IMR-90 (cell line): ENCODE measurements at regions of chr11 and their contacts with region 1.

Region 1: GRCh38 chr11:57644748-57645688 is 4.7 kb downstream of the YPEL4 start:
- DNase-seq: peak; percentile 67
- ATAC-seq: peak; percentile 28; the same call in 1 of the 2 replicates
- H3K4me3 ChIP-seq: no peak overlapping the region
- H3K27ac ChIP-seq: no peak overlapping the region
- H3K4me1 ChIP-seq: peaks cover 34% of the 10 kb centered on the region
- H3K27me3 ChIP-seq: no peaks in the 10 kb centered on the region
- CTCF ChIP-seq: peak; percentile 73
- POLR2A ChIP-seq: no peak
- RAD21 ChIP-seq: peak; percentile 64

Region 2: GRCh38 chr11:57456960-57457642 is 187.9 kb before region 1 on chr11:
- CTCF ChIA-PET with region 1: no interaction called
- POLR2A ChIA-PET with region 1: interaction called, 4 read pairs
- dilution Hi-C with region 1: no loop called
- in situ Hi-C with region 1: loop called (anchors 10 kb)
- intact Hi-C with region 1: loop called (anchors 1 kb)
- DNase-seq: peak; percentile 77
- ATAC-seq: peak; percentile 89
- H3K4me3 ChIP-seq: no peak overlapping the region
- H3K27ac ChIP-seq: no peak overlapping the region
- H3K4me1 ChIP-seq: peaks cover 3% of the 10 kb centered on the region; the same call in 1 of the 2 replicates
- H3K27me3 ChIP-seq: peaks cover 51% of the 10 kb centered on the region
- CTCF ChIP-seq: peak; percentile 97
- POLR2A ChIP-seq: no peak
- RAD21 ChIP-seq: peak; percentile 92

Region 3: DNA sequence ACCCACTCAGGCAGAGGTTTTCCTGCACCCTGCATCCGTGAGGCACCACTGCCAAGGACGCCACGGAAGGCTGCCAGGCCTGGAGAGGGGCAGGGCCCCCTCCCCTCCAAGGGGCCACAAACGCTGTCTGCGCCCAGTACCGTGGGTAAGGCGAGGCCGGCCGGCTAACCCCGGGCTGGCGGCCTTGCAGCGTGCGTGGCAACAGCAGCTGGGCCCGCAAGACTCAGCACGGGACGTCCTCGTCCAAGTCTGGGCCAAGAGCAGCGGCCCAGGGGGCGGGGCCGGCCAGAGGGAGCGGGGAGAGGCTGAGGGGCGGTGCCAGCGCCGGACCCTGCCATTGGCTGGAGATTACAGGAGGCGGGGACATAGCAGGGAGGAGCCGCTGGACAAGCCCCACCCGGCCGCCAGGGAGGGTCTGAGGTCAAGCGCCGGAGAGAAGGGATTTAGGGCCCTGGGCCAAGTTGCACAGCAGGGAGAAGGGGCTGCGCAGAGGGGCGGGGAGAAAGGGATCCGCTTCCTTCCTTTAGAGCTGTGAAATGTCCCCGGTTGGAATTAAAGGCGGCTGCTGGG is 145.5 kb before region 1 on chr11:
- CTCF ChIA-PET with region 1: interaction called, 5 read pairs
- POLR2A ChIA-PET with region 1: no interaction called
- dilution Hi-C with region 1: no loop called
- in situ Hi-C with region 1: loop called (anchors 10 kb)
- intact Hi-C with region 1: no loop called
- DNase-seq: peak; percentile 82
- ATAC-seq: peak; percentile 100
- H3K4me3 ChIP-seq: peak overlapping the region; percentile 23; the same call in 1 of the 2 replicates
- H3K27ac ChIP-seq: peak overlapping the region; percentile 39; the same call in 1 of the 2 replicates
- H3K4me1 ChIP-seq: peaks cover 15% of the 10 kb centered on the region
- H3K27me3 ChIP-seq: no peaks in the 10 kb centered on the region
- CTCF ChIP-seq: no peak
- POLR2A ChIP-seq: no peak
- RAD21 ChIP-seq: no peak

Region 4: GRCh38 chr11:57567515-57568329 is 77.3 kb before region 1 on chr11 and contains the start of gene UBE2L6:
- CTCF ChIA-PET with region 1: interaction called, 34 read pairs
- POLR2A ChIA-PET with region 1: interaction called, 4 read pairs
- dilution Hi-C with region 1: no loop called
- in situ Hi-C with region 1: loop called (anchors 5 kb)
- intact Hi-C with region 1: loop called (anchors 1 kb)
- DNase-seq: no peak
- ATAC-seq: peak; percentile 81
- H3K4me3 ChIP-seq: peak within 1 kb of the TSS; percentile 80
- H3K27ac ChIP-seq: peak within 1 kb of the TSS; percentile 83
- H3K4me1 ChIP-seq: peaks cover 11% of the 10 kb centered on the region
- H3K27me3 ChIP-seq: no peaks in the 10 kb centered on the region
- CTCF ChIP-seq: peak; percentile 39
- POLR2A ChIP-seq: no peak
- RAD21 ChIP-seq: no peak
- total RNA-seq, gene UBE2L6: 34.4 and 37.5 TPM in 2 replicates